ENCODE measurements at regions of chr17 and their contacts with region 1.

Region 1: GRCh38 chr17:40696537-40697072 is 6.9 kb downstream of the KRT24 start:
- DNase-seq: no peak
- ATAC-seq: no peak
- H3K4me3 ChIP-seq: no peak overlapping the region
- H3K27ac ChIP-seq: no peak overlapping the region
- H3K4me1 ChIP-seq: no peaks in the 10 kb centered on the region
- H3K27me3 ChIP-seq: no peaks in the 10 kb centered on the region; a peak in 1 of 4 replicates
- CTCF ChIP-seq: no peak
- EP300 ChIP-seq: no peak
- POLR2A ChIP-seq: no peak
- RAD21 ChIP-seq: no peak

Region 2: DNA sequence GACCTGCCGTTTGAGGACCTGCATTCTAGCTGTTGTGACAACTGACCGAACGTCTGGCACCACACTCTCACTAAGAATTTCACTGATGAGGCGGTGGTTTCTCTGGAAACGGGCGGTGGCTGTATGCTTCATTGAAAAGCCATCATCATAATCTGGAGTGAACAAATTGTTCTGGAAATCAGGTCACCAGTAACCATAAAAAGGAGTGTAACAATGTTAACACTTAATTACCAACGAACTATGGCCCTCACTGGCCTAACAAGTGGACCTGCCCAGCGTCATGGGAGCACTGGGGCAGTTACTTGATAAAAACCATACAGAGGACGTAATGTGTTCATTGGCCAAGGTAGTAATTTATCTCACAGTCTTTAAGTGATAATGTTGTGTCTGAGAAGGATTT is 64.4 kb before region 1 on chr17:
- CTCF ChIA-PET with region 1: no interaction called
- POLR2A ChIA-PET with region 1: no interaction called
- RAD21 ChIA-PET with region 1: no interaction called
- SMC1A ChIA-PET with region 1: no interaction called
- in situ Hi-C with region 1: no loop called
- intact Hi-C with region 1: no loop called
- DNase-seq: no peak
- ATAC-seq: no peak
- H3K4me3 ChIP-seq: no peak overlapping the region
- H3K27ac ChIP-seq: no peak overlapping the region
- H3K4me1 ChIP-seq: no peaks in the 10 kb centered on the region
- H3K27me3 ChIP-seq: no peaks in the 10 kb centered on the region
- CTCF ChIP-seq: no peak
- EP300 ChIP-seq: no peak
- POLR2A ChIP-seq: no peak
- RAD21 ChIP-seq: no peak

Region 3: DNA sequence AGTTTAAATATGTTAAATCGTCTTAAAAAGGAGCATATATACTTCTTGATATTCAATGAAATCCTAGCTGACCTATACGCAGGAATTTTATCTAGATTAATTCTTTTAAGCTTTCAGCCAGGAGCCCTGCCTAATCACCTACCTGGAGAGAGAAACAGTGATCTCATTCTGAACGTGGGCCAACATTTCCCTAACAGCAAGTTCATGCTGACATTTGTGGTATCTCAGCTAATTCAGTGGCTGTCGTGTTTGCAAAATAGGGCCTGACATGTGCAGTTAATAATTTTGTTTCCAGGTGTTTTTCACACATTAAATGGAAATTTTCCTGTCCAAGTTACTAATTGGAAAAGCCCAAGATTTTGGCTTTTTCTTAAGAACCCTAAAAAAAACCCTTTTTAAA is 10.4 kb before region 1 on chr17:
- CTCF ChIA-PET with region 1: interaction called, 18 read pairs
- POLR2A ChIA-PET with region 1: no interaction called
- RAD21 ChIA-PET with region 1: no interaction called
- SMC1A ChIA-PET with region 1: interaction called, 58 read pairs
- in situ Hi-C with region 1: no loop called
- intact Hi-C with region 1: no loop called
- DNase-seq: no peak
- ATAC-seq: no peak
- H3K4me3 ChIP-seq: no peak overlapping the region
- H3K27ac ChIP-seq: no peak overlapping the region
- H3K4me1 ChIP-seq: no peaks in the 10 kb centered on the region
- H3K27me3 ChIP-seq: 0 out of 4 replicates have a peak, but pooled peaks cover 0 to 4% of the 10 kb centered on the region in 2 experiments
- CTCF ChIP-seq: no peak
- EP300 ChIP-seq: no peak
- POLR2A ChIP-seq: no peak
- RAD21 ChIP-seq: no peak